HCT116 (cell line): ENCODE measurements at regions of chr3 and their contacts with region 1.

Region 1: DNA sequence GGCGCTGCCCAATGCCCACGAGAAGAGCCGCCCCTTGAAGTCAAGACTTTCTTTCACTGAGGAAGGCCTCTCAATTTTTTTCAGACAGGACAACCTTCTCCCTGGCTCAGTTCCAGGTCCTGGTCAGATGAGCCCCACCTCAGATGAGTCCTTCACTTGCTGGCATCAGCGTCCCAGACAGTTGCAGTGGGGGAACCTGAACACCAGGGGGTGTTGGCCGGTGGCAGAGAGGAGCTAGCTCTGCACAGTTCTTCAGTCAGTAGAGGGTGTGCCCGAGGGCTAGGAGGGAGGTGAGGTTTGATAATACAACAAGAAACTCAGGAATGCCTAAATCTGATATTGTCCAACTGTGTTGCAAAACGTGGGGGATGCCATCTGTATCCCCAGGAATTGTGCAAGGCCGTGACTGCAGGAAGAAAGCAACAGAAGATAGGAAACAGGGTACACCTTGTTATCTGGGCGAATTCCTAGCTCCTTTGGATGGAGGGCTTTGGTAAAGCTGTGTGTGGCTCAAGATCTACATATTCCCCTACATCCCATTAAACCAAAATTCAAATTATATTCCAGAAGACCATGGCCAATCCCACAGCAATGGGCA is 34.3 kb downstream of the CCR3 start:
- DNase-seq: peak; percentile 39
- ATAC-seq: peak; percentile 100
- H3K4me3 ChIP-seq: no peak overlapping the region
- H3K27ac ChIP-seq: no peak overlapping the region
- H3K4me1 ChIP-seq: peaks cover 0 to 7% of the 10 kb centered on the region in 2 experiments; a peak in 1 of 4 replicates
- H3K27me3 ChIP-seq: no peaks in the 10 kb centered on the region
- CTCF ChIP-seq: peak; percentile 60 to 87 (median 81); a peak in 5 of 6 replicates
- POLR2A ChIP-seq: no peak
- RAD21 ChIP-seq: peak; percentile 59

Region 2: GRCh38 chr3:46059432-46059831 is 217.2 kb before region 1 on chr3:
- CTCF ChIA-PET with region 1: no interaction called
- POLR2A ChIA-PET with region 1: no interaction called
- RAD21 ChIA-PET with region 1: no interaction called
- intact Hi-C with region 1: no loop called
- DNase-seq: no peak
- ATAC-seq: no peak
- H3K4me3 ChIP-seq: no peak overlapping the region
- H3K27ac ChIP-seq: no peak overlapping the region
- H3K4me1 ChIP-seq: no peaks in the 10 kb centered on the region
- H3K27me3 ChIP-seq: peaks cover 22% of the 10 kb centered on the region
- CTCF ChIP-seq: no peak
- POLR2A ChIP-seq: no peak
- RAD21 ChIP-seq: no peak

Region 3: DNA sequence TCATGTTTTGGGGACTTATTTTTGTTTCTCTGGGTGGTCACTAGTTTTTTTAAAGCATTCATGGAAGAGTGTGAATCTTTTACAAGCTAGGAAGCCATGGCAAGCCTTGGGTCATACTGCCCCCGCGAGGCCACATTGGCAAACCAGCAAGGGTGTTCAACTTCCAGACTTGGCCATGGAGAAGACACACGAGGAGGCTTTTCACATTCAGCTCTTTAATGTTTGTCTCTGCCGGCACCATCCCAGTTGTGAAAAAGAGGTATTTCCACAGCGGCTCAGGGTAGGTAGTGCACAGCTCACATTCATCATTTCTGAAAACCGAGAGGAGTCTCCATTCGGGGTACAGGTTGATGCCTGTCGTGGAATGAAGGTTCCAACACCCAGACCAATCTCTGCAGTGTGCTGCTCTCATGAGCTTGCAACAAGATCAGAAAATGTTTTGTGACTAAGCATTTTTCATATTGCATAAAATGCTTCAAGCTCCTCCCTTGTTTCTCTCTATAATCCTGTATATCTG is 101.9 kb after region 1 on chr3:
- CTCF ChIA-PET with region 1: interaction called, 14 read pairs
- POLR2A ChIA-PET with region 1: no interaction called
- RAD21 ChIA-PET with region 1: interaction called in 1 of 2 experiments, 3 read pairs
- intact Hi-C with region 1: loop called (anchors 1 kb)
- DNase-seq: peak; percentile 48
- ATAC-seq: peak; percentile 97
- H3K4me3 ChIP-seq: no peak overlapping the region
- H3K27ac ChIP-seq: no peak overlapping the region
- H3K4me1 ChIP-seq: peaks cover 0 to 3% of the 10 kb centered on the region in 2 experiments; a peak in 1 of 4 replicates
- H3K27me3 ChIP-seq: peaks cover 27% of the 10 kb centered on the region
- CTCF ChIP-seq: peak; percentile 66 to 92 (median 87)
- POLR2A ChIP-seq: no peak
- RAD21 ChIP-seq: peak; percentile 85